SK-N-SH (cell line): ENCODE measurements at regions of chr9 and their contacts with region 1.

Region 1: GRCh38 chr9:33404788-33405362 is 2.5 kb upstream of the AQP7 start:
- DNase-seq: no peak
- H3K4me3 ChIP-seq: no peak overlapping the region
- H3K27ac ChIP-seq: no peak overlapping the region
- H3K4me1 ChIP-seq: no peaks in the 10 kb centered on the region
- H3K27me3 ChIP-seq: no peaks in the 10 kb centered on the region
- CTCF ChIP-seq: no peak
- EP300 ChIP-seq: no peak
- RAD21 ChIP-seq: no peak

Region 2: GRCh38 chr9:33415501-33416038 is 10.7 kb after region 1 on chr9:
- CTCF ChIA-PET with region 1: interaction called, 28 read pairs
- POLR2A ChIA-PET with region 1: no interaction called
- DNase-seq: peak; percentile 76
- H3K4me3 ChIP-seq: no peak overlapping the region
- H3K27ac ChIP-seq: no peak overlapping the region
- H3K4me1 ChIP-seq: no peaks in the 10 kb centered on the region
- H3K27me3 ChIP-seq: no peaks in the 10 kb centered on the region
- CTCF ChIP-seq: peak; percentile 71
- EP300 ChIP-seq: no peak
- RAD21 ChIP-seq: peak; percentile 54

Region 3: DNA sequence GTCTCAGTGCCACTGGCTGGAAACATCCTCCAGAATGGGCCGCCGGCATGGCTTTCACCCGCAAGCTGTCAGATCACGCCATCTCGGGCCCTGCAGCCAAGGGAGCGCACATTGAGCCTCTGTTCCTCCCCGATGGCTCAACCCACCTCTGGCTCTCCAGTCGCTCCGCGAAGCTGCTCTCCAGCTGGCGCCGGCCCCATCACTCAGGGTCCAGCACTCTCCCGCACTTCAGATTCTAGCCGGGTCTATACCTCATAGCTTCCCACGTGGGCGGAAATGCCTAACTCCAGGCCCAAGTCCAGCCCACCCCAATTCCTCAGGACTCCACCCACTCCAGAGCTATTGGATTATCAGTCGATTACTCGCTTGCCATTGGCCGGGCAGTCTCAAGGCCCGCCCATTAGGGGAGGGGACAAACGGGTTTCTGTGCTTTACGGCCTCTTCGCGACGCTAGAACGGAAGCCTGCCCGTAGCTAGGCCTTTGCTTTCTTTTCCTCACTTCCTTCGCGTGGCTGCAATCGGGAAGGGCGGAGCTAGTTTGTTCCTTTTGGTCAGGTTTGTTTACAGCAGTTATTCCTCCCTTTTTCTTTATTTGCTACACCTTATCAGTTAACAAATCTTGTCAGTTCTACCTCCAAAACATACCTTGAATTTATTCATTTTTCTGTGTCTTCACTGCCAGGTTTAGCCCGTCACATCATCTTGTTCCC is 68.9 kb after region 1 on chr9 and contains the start of gene NOL6:
- CTCF ChIA-PET with region 1: interaction called, 22 read pairs
- POLR2A ChIA-PET with region 1: no interaction called
- DNase-seq: peak; percentile 96
- H3K4me3 ChIP-seq: peak within 1 kb of the TSS; percentile 74 to 79
- H3K27ac ChIP-seq: peak within 1 kb of the TSS; percentile 69 to 73
- H3K4me1 ChIP-seq: peaks cover 0 to 11% of the 10 kb centered on the region in 2 experiments; a peak in 1 of 4 replicates
- H3K27me3 ChIP-seq: no peaks in the 10 kb centered on the region
- CTCF ChIP-seq: no peak
- EP300 ChIP-seq: no peak
- RAD21 ChIP-seq: no peak
- polyA plus RNA-seq, gene NOL6: 52.2 and 61.3 TPM in 2 replicates